KBM-7 (cell line): ENCODE measurements at regions of chr1 and their contacts with region 1.

Region 1: DNA sequence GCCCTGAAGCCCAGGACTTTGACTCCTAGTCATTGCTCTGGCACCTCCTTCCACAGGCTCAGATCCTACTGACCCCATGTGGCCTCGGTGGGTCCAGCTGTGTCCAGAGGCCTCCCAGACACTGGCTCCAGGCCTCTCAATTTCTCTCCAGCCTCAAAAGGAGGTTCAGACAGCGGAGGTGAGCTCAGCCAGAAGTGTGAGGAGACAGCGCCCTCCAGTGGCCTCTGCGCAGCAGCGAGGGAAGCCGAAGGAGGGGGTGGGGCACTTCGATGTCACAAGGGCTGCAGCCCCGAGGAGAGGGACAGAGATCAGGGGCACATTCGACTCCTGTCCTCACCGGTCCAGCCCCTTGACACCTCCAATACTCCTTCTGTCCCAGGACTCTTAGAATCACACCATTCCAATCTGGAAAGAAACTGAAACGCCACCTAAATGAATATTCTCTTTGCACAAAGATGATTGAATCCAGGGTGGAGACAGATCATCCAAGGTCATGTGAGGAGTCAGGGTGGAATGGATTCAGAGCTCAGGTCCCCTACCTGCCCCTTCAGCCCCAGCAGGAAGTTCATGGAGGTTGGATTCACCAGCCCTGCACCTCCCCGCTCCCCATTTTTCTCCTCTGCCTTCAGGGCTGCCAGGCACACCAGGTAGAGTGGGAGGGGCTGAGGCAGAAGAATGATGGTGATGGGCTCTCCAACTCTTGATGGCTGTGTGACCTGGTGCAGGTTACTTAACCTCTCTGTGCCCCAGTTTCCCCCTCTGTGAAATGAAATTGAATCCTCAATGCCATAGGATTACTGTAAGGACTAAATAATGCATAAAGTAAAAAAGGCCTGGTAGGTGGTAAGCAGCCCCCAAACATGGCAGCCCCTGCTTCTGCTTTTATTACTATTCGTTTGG is 34.8 kb upstream of the ZBTB40 start:
- DNase-seq: peak; percentile 85

Region 2: DNA sequence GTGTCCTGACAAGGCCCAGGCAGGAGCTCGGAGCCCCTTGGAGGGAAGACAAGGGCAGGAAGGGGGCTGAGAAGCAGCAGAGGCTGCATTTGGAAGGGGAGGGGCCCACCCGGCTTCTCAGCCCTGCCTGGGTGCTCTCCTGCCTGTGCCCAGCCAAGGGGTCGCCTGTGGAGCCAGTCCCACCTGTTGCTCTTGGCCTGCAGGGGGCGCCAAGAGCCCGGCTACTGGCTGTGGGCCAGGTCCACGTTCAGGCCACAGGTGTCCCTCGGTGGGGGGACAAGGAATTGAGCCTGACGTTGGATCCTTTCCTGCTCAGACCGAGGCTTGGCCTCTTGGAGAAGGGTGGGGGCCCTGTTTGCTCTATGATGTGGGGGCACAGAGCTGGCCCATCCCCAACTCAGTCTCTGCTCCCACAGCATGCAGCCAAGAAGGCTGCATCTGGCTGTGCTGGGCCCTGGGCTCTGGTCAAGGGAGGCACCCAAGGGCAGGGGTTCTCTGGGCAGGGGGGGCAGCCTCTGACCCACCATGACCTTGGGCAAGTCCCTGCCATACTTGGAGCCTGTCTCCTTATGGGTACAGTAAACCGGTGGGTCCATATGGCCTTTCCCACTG is 284.8 kb before region 1 on chr1:
- in situ Hi-C with region 1: loop called (anchors 25 kb)
- DNase-seq: peak; percentile 60

Region 3: GRCh38 chr1:22315398-22316078 is 101.3 kb before region 1 on chr1:
- in situ Hi-C with region 1: no loop called
- DNase-seq: no peak

Region 4: GRCh38 chr1:22641906-22642636 is 225.3 kb after region 1 on chr1:
- in situ Hi-C with region 1: loop called (anchors 10 kb)
- DNase-seq: peak; percentile 71

Region 5: GRCh38 chr1:22754106-22754768 is 337.4 kb after region 1 on chr1:
- in situ Hi-C with region 1: no loop called
- DNase-seq: no peak